ENCODE measurements at regions of chr17 and their contacts with region 1.

Region 1: GRCh38 chr17:42618442-42619150 is 9.1 kb downstream of the TUBG1 start:
- DNase-seq: peak; percentile 50
- H3K4me3 ChIP-seq: no peak overlapping the region
- H3K27ac ChIP-seq: peak overlapping the region; percentile 60
- H3K4me1 ChIP-seq: peaks cover 27% of the 10 kb centered on the region
- CTCF ChIP-seq: peak; percentile 57

Region 2: GRCh38 chr17:42596386-42596785 is 22.2 kb before region 1 on chr17:
- CTCF ChIA-PET with region 1: no interaction called
- POLR2A ChIA-PET with region 1: no interaction called
- intact Hi-C with region 1: no loop called
- DNase-seq: no peak
- H3K4me3 ChIP-seq: no peak overlapping the region
- H3K27ac ChIP-seq: no peak overlapping the region
- H3K4me1 ChIP-seq: no peaks in the 10 kb centered on the region
- CTCF ChIP-seq: no peak

Region 3: GRCh38 chr17:42659079-42659931 is 40.7 kb after region 1 on chr17 and contains the start of gene TUBG2:
- CTCF ChIA-PET with region 1: no interaction called
- POLR2A ChIA-PET with region 1: interaction called, 3 read pairs
- intact Hi-C with region 1: loop called (anchors 5 kb)
- DNase-seq: peak; percentile 88
- H3K4me3 ChIP-seq: peak within 1 kb of the TSS; percentile 70
- H3K27ac ChIP-seq: no peak within 1 kb of the TSS
- H3K4me1 ChIP-seq: peaks cover 17% of the 10 kb centered on the region
- CTCF ChIP-seq: no peak
- total RNA-seq, gene TUBG2: 5.5 and 10.4 TPM in 2 replicates